ENCODE measurements at regions of chr5 and their contacts with region 1.

Region 1: DNA sequence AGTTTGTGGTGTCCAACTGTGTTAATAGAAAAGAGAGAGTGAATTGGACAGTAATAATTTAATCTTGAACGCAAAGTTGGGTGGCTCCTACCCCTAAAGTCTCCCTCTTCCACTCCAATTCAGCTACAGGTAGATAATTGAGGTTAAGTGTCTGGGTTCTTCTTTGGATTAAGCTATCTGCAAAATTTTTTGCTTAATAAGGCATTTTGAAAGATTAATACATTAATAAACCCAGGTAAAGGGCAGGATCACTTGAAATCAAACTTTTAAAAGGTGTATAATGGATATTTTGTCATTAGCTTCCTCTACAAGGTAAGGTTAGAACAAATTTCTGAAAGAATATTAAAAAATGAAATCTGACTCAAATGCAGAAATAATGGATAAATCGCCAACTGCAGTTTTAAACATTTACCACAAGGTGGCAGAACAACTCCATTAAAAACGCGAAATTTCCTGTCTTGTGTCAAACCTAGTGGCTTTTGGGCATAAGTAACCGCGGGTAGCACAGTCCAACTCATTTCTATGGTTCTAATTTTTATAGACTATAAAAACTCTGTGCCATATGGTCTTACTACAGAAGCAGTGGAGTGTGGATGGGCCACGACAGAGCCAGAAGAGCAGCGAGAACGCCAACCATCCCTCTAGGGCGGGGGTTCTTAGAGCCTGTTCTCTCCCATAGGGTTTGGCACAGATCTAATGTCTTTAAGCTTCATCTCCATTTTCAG is 276.5 kb downstream of the ARHGEF28 start:
- DNase-seq: peak; percentile 55
- ATAC-seq: peak; percentile 3; the same call in 1 of the 3 replicates
- H3K4me3 ChIP-seq: no peak overlapping the region
- H3K27ac ChIP-seq: no peak overlapping the region
- H3K4me1 ChIP-seq: peaks cover 12% of the 10 kb centered on the region
- H3K27me3 ChIP-seq: peaks cover 0 to 7% of the 10 kb centered on the region in 2 experiments; a peak in 1 of 4 replicates
- CTCF ChIP-seq: peak; percentile 33 to 72 (median 68); a peak in 5 of 6 replicates
- EP300 ChIP-seq: no peak
- POLR2A ChIP-seq: no peak
- RAD21 ChIP-seq: peak; percentile 86

Region 2: GRCh38 chr5:73921741-73922140 is 19.3 kb after region 1 on chr5:
- CTCF ChIA-PET with region 1: interaction called, 11 read pairs
- POLR2A ChIA-PET with region 1: interaction called, 3 read pairs
- RAD21 ChIA-PET with region 1: interaction called, 6 read pairs
- SMC1A ChIA-PET with region 1: interaction called, 4 read pairs
- in situ Hi-C with region 1: no loop called
- intact Hi-C with region 1: no loop called
- DNase-seq: no peak
- ATAC-seq: no peak
- H3K4me3 ChIP-seq: no peak overlapping the region
- H3K27ac ChIP-seq: no peak overlapping the region
- H3K4me1 ChIP-seq: no peaks in the 10 kb centered on the region
- H3K27me3 ChIP-seq: no peaks in the 10 kb centered on the region; a peak in 2 of 4 replicates
- CTCF ChIP-seq: no peak
- EP300 ChIP-seq: no peak
- POLR2A ChIP-seq: no peak
- RAD21 ChIP-seq: no peak

Region 3: GRCh38 chr5:74035521-74035981 is 133.1 kb after region 1 on chr5:
- CTCF ChIA-PET with region 1: interaction called, 6 read pairs
- POLR2A ChIA-PET with region 1: no interaction called
- RAD21 ChIA-PET with region 1: interaction called, 3 read pairs
- SMC1A ChIA-PET with region 1: interaction called, 5 read pairs
- in situ Hi-C with region 1: no loop called
- intact Hi-C with region 1: loop called (anchors 5 kb)
- DNase-seq: peak; percentile 59
- ATAC-seq: peak; percentile 97
- H3K4me3 ChIP-seq: no peak overlapping the region
- H3K27ac ChIP-seq: no peak overlapping the region
- H3K4me1 ChIP-seq: peaks cover 8% of the 10 kb centered on the region; the same call in 1 of the 2 replicates
- H3K27me3 ChIP-seq: no peaks in the 10 kb centered on the region
- CTCF ChIP-seq: peak; percentile 56 to 71 (median 70)
- EP300 ChIP-seq: no peak
- POLR2A ChIP-seq: no peak
- RAD21 ChIP-seq: peak; percentile 82

Region 4: DNA sequence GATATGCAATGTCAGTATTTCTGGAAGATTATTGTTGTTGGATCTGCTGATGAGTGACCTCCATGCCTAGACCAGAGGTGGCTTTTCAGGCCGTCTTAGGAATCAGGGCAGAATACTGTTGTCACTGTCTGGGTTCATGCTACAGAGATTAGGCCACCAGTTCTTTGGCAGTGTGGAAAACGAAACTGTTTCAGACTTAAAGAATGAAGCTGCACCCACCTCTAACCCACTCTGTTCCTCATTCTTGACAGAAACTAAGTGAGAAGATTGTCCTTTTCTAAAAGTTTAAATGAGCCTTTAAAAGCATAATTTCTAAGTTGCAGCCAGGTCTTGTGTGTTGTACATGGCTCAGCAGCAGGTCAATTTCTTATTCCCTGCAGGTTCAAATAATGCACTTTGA is 293.7 kb after region 1 on chr5:
- CTCF ChIA-PET with region 1: no interaction called
- POLR2A ChIA-PET with region 1: no interaction called
- RAD21 ChIA-PET with region 1: no interaction called
- SMC1A ChIA-PET with region 1: no interaction called
- in situ Hi-C with region 1: no loop called
- intact Hi-C with region 1: loop called (anchors 10 kb)
- DNase-seq: peak; percentile 44
- ATAC-seq: peak; percentile 79
- H3K4me3 ChIP-seq: no peak overlapping the region
- H3K27ac ChIP-seq: peak overlapping the region; percentile 33; the same call in 1 of the 2 replicates
- H3K4me1 ChIP-seq: peaks cover 29% of the 10 kb centered on the region
- H3K27me3 ChIP-seq: no peaks in the 10 kb centered on the region; a peak in 1 of 4 replicates
- CTCF ChIP-seq: no peak
- EP300 ChIP-seq: no peak
- POLR2A ChIP-seq: no peak
- RAD21 ChIP-seq: no peak

Region 5: DNA sequence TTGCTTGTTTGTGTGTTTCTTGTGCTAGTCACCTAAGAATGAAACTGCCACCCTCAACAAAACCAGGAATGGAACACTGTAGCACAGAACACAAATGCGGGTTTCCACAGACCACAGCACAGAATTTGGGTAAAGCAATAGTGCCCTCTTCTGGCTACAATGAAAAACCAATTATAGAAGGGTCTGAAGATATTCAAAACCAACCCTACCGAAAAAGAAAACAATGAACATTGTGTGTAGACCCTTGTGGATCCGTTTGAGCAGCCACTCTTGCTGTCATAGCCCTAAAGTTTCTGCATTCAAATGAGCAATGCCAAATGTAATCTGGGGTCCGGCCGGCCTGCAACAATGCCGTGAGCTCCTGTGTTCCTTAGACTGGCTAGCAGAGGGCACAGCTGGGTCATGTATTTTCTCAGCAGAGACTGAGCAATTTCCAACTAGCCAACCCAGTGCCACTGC is 746.4 kb after region 1 on chr5:
- CTCF ChIA-PET with region 1: interaction called, 65 read pairs
- POLR2A ChIA-PET with region 1: no interaction called
- RAD21 ChIA-PET with region 1: interaction called, 45 read pairs
- SMC1A ChIA-PET with region 1: interaction called, 71 read pairs
- in situ Hi-C with region 1: loop called (anchors 5 kb)
- intact Hi-C with region 1: loop called (anchors 1 kb)
- DNase-seq: no peak
- ATAC-seq: peak; percentile 94
- H3K4me3 ChIP-seq: no peak overlapping the region
- H3K27ac ChIP-seq: no peak overlapping the region
- H3K4me1 ChIP-seq: no peaks in the 10 kb centered on the region
- H3K27me3 ChIP-seq: no peaks in the 10 kb centered on the region; a peak in 2 of 4 replicates
- CTCF ChIP-seq: peak; percentile 60 to 73 (median 64)
- EP300 ChIP-seq: no peak
- POLR2A ChIP-seq: no peak
- RAD21 ChIP-seq: peak; percentile 95

Region 6: DNA sequence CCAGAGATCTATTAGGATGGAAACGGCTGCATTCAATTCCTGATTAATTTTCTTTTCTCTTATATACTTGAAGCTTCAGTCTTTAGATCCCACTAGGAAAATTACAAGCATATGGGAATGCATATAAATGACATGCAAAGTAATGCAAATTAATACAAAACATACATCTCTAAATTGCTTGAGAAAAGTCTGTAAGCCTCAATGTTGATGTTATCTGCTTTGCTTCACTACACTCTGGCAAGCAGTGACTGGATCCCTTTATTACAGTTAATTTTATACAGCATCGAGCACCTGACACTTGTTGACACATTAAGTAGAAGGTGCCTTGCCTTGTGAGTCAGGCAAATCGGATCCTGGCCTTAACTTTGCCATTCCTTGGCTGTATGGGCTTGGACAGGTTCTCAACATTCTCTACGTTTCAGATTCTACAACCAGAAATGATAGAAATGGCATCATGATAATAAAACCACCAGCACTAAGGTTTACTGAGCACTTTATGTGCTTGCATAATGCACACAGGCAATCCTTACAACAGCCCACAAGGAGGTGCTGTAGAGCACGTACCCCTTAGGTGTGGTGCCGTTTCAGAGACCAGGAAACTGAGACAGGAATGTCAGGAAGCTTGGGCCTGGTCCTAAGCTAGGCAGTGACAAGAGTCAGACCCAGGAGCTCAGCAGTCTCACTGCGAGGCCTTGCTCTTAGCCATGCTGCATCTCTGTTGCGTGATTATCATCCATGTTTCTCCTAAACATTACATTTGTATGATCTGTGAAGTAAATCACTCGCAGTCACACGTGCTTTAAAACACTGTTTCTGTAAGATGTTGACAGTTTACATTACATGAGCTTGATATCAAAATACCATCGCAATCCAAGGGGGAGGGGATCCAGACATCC is 1147.2 kb after region 1 on chr5:
- CTCF ChIA-PET with region 1: no interaction called
- POLR2A ChIA-PET with region 1: no interaction called
- RAD21 ChIA-PET with region 1: no interaction called
- SMC1A ChIA-PET with region 1: no interaction called
- in situ Hi-C with region 1: no loop called
- intact Hi-C with region 1: no loop called
- DNase-seq: no peak
- ATAC-seq: peak; percentile 64
- H3K4me3 ChIP-seq: 0 out of 2 replicates have a peak overlapping the region, but pooled peaks have one; percentile 34
- H3K27ac ChIP-seq: no peak overlapping the region
- H3K4me1 ChIP-seq: peaks cover 9% of the 10 kb centered on the region
- H3K27me3 ChIP-seq: peaks cover 6 to 13% of the 10 kb centered on the region in 2 experiments; a peak in 3 of 4 replicates
- CTCF ChIP-seq: peak; percentile 59 to 76 (median 75)
- EP300 ChIP-seq: no peak
- POLR2A ChIP-seq: no peak
- RAD21 ChIP-seq: peak; percentile 52